OCI-LY7 (cell line): ENCODE measurements at regions of chr9 and their contacts with region 1.

Region 1: GRCh38 chr9:37575921-37576721 is at the start of gene FBXO10:
- DNase-seq: peak; percentile 73
- H3K4me3 ChIP-seq: peak within 1 kb of the TSS; percentile 78
- H3K27ac ChIP-seq: peak within 1 kb of the TSS; percentile 62
- H3K4me1 ChIP-seq: peaks cover 38% of the 10 kb centered on the region
- CTCF ChIP-seq: no peak
- total RNA-seq, gene FBXO10: 9.4 and 16.1 TPM in 2 replicates

Region 2: GRCh38 chr9:37531699-37532098 is 44.4 kb before region 1 on chr9:
- CTCF ChIA-PET with region 1: no interaction called
- POLR2A ChIA-PET with region 1: interaction called, 4 read pairs
- intact Hi-C with region 1: loop called (anchors 5 kb)
- DNase-seq: peak; percentile 55
- H3K4me3 ChIP-seq: peak overlapping the region; percentile 21
- H3K27ac ChIP-seq: peak overlapping the region; percentile 33
- H3K4me1 ChIP-seq: peaks cover 29% of the 10 kb centered on the region
- CTCF ChIP-seq: no peak

Region 3: GRCh38 chr9:37565661-37566618 is 10.2 kb before region 1 on chr9:
- CTCF ChIA-PET with region 1: no interaction called
- POLR2A ChIA-PET with region 1: interaction called, 12 read pairs
- intact Hi-C with region 1: no loop called
- DNase-seq: peak; percentile 67
- H3K4me3 ChIP-seq: peak overlapping the region; percentile 29
- H3K27ac ChIP-seq: peak overlapping the region; percentile 30
- H3K4me1 ChIP-seq: peaks cover 23% of the 10 kb centered on the region
- CTCF ChIP-seq: no peak

Region 4: DNA sequence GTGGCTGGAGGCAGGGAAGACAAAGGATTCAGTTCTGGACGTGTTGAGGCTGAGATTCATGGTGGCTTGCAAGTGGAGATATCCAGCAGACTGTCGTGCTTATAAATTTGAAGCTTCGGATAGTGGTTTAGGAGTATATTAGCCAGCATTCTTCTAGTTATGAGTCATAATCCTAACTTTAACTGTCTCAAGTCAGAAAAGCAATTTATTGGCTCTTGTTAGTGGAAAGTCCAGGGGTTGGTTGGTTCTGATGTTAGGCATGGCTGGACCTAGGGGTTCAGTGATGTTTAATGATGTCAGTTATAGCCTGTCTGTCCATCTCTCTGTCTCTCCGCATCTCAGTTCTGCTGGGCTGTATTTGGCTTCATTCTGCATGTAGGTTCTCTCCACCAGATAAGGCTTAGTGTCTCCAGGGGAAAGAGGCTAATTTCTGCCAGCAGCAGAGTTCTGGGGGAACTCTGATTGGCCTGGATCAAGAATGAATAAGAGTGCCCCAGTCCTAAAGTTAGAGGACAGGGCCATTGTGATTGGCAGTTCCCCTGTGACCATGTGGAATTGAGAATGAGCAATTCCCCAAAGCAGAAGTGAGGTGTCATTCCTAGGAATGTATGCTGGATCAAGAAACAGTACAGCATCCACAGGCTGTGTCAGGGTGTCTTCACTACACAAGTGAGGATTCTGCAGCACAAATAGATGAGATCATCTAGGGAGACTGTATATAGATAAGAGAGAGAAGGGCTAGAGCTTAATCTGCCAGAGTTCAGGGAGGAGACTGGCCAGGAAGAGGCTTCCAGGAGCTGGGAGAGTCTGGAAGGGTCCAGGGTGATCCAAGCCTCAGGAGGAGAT is 565.8 kb after region 1 on chr9:
- CTCF ChIA-PET with region 1: no interaction called
- POLR2A ChIA-PET with region 1: no interaction called
- intact Hi-C with region 1: no loop called
- DNase-seq: no peak
- H3K4me3 ChIP-seq: no peak overlapping the region
- H3K27ac ChIP-seq: no peak overlapping the region
- H3K4me1 ChIP-seq: no peaks in the 10 kb centered on the region
- CTCF ChIP-seq: no peak